IMR-90 (cell line): ENCODE measurements at regions of chr11 and their contacts with region 1.

Region 1: GRCh38 chr11:2885676-2886081 is at the start of gene CDKN1C:
- DNase-seq: peak; percentile 69
- ATAC-seq: peak; percentile 79
- H3K4me3 ChIP-seq: peak within 1 kb of the TSS; percentile 86
- H3K27ac ChIP-seq: peak within 1 kb of the TSS; percentile 44
- H3K4me1 ChIP-seq: peaks cover 13% of the 10 kb centered on the region
- H3K27me3 ChIP-seq: no peaks in the 10 kb centered on the region; the same call in 1 of the 2 replicates
- CTCF ChIP-seq: no peak
- POLR2A ChIP-seq: peak; percentile 79
- RAD21 ChIP-seq: no peak
- total RNA-seq, gene CDKN1C: 1.6 and 2.2 TPM in 2 replicates

Region 2: GRCh38 chr11:2196970-2197770 is 688.5 kb before region 1 on chr11:
- CTCF ChIA-PET with region 1: no interaction called
- POLR2A ChIA-PET with region 1: no interaction called
- dilution Hi-C with region 1: no loop called
- in situ Hi-C with region 1: loop called (anchors 25 kb)
- intact Hi-C with region 1: loop called (anchors 10 kb)
- DNase-seq: peak; percentile 38
- ATAC-seq: peak; percentile 93
- H3K4me3 ChIP-seq: no peak overlapping the region
- H3K27ac ChIP-seq: no peak overlapping the region
- H3K4me1 ChIP-seq: no peaks in the 10 kb centered on the region
- H3K27me3 ChIP-seq: peaks cover 17% of the 10 kb centered on the region; the same call in 1 of the 2 replicates
- CTCF ChIP-seq: peak; percentile 81
- POLR2A ChIP-seq: no peak
- RAD21 ChIP-seq: peak; percentile 86

Region 3: GRCh38 chr11:2428322-2428795 is 457.3 kb before region 1 on chr11:
- CTCF ChIA-PET with region 1: no interaction called
- POLR2A ChIA-PET with region 1: no interaction called
- dilution Hi-C with region 1: no loop called
- in situ Hi-C with region 1: loop called (anchors 10 kb)
- intact Hi-C with region 1: loop called (anchors 1 kb)
- DNase-seq: peak; percentile 34
- ATAC-seq: peak; percentile 88
- H3K4me3 ChIP-seq: no peak overlapping the region
- H3K27ac ChIP-seq: no peak overlapping the region
- H3K4me1 ChIP-seq: no peaks in the 10 kb centered on the region
- H3K27me3 ChIP-seq: peaks cover 11% of the 10 kb centered on the region; the same call in 1 of the 2 replicates
- CTCF ChIP-seq: peak; percentile 83
- POLR2A ChIP-seq: no peak
- RAD21 ChIP-seq: peak; percentile 84

Region 4: GRCh38 chr11:2644844-2645778 is 240.6 kb before region 1 on chr11:
- CTCF ChIA-PET with region 1: no interaction called
- POLR2A ChIA-PET with region 1: no interaction called
- dilution Hi-C with region 1: no loop called
- in situ Hi-C with region 1: no loop called
- intact Hi-C with region 1: loop called (anchors 5 kb)
- DNase-seq: no peak
- ATAC-seq: no peak
- H3K4me3 ChIP-seq: no peak overlapping the region
- H3K27ac ChIP-seq: no peak overlapping the region
- H3K4me1 ChIP-seq: no peaks in the 10 kb centered on the region
- H3K27me3 ChIP-seq: no peaks in the 10 kb centered on the region; the same call in 1 of the 2 replicates
- CTCF ChIP-seq: no peak
- POLR2A ChIP-seq: no peak
- RAD21 ChIP-seq: no peak

Region 5: DNA sequence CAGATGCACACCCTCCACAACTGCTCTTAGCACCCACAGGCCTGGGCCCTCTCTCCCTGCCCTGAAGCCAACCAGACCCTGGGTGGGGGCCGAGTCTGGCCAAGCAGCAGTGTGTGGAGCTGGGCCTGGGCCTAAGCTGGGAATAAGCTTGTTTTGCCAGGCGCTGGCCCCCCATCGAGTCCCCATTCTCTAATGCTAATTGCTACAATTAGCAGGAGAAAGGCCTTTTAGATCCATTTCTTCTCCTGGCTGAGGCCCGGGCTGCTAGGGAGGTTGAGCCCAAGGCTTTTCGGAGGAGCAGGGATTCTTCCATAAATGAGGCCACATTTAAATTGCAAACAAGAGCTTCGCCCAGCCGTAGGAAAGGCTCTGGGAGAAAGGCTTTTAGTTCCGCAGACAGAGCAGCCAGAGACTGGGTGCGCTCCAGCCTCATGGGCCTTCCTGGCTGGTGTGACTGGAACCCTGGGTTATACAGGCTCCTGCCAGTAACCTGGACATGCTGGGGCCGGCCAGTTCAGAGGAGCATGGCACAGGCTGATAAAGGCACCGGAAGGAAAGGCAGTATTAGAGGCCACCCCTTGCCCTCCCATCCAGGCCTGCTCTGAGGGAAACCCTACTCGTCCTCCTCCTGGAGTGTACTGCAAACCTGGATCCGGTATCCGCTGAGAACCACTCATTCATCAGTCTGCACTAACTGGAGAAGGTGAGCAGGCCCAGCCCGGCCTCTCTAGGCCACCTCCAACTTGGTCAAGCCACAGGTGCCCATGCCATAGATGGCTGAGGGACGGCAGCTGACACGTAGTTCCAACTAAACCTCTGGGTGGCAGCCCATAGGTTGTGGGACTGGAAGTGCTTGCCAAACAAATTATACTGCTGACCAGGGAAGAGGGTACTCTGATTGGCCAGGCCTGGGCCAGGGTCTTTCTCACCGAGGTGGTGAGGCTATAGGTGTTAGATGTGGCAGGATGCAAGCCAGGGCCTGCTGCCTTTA is 192.1 kb before region 1 on chr11:
- CTCF ChIA-PET with region 1: no interaction called
- POLR2A ChIA-PET with region 1: no interaction called
- dilution Hi-C with region 1: no loop called
- in situ Hi-C with region 1: no loop called
- intact Hi-C with region 1: loop called (anchors 2 kb)
- DNase-seq: no peak
- ATAC-seq: no peak
- H3K4me3 ChIP-seq: no peak overlapping the region
- H3K27ac ChIP-seq: no peak overlapping the region
- H3K4me1 ChIP-seq: peaks cover 3% of the 10 kb centered on the region
- H3K27me3 ChIP-seq: no peaks in the 10 kb centered on the region; the same call in 1 of the 2 replicates
- CTCF ChIP-seq: no peak
- POLR2A ChIP-seq: no peak
- RAD21 ChIP-seq: no peak

Region 6: DNA sequence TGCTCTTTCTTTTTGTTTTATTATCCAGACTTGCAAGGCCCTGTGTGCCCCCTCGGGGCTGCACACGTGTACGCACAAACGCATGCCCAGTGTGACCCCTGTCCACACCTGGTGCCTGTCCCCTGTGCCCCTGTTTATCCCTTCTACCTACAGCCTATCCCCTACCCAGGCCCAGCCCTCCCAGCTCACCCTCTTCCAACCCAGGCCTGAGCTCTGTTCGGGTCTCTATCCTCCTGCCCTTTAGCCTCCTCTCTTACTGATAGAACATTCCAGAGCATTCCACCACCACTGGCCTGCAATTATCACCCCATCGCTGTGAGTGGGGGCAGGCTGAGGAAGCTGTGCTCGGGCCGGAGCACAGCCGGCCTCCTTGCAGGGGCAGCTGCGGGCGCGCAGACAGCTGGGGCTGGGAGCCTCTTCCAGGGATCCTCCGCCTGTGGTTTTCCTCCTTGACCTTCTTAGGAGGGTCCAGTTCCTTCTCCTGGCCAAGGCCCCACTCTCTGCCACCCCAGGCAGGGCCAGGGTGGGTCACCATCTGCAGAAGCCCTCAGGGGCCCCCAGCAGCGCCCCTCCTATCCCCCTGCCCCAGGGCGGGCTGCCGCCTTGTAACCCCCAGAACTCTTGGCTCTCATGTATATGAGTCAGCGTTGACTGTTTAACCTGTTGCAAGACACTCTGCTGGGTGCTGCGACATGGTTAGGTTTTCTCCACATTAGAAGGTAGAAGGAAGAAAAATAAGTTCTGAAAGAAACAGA is 144.1 kb before region 1 on chr11:
- CTCF ChIA-PET with region 1: no interaction called
- POLR2A ChIA-PET with region 1: no interaction called
- dilution Hi-C with region 1: no loop called
- in situ Hi-C with region 1: no loop called
- intact Hi-C with region 1: loop called (anchors 1 kb)
- DNase-seq: peak; percentile 74
- ATAC-seq: peak; percentile 95
- H3K4me3 ChIP-seq: no peak overlapping the region
- H3K27ac ChIP-seq: peak overlapping the region; percentile 74; the same call in 1 of the 2 replicates
- H3K4me1 ChIP-seq: peaks cover 19% of the 10 kb centered on the region
- H3K27me3 ChIP-seq: peaks cover 2% of the 10 kb centered on the region; the same call in 1 of the 2 replicates
- CTCF ChIP-seq: no peak
- POLR2A ChIP-seq: no peak
- RAD21 ChIP-seq: no peak

Region 7: DNA sequence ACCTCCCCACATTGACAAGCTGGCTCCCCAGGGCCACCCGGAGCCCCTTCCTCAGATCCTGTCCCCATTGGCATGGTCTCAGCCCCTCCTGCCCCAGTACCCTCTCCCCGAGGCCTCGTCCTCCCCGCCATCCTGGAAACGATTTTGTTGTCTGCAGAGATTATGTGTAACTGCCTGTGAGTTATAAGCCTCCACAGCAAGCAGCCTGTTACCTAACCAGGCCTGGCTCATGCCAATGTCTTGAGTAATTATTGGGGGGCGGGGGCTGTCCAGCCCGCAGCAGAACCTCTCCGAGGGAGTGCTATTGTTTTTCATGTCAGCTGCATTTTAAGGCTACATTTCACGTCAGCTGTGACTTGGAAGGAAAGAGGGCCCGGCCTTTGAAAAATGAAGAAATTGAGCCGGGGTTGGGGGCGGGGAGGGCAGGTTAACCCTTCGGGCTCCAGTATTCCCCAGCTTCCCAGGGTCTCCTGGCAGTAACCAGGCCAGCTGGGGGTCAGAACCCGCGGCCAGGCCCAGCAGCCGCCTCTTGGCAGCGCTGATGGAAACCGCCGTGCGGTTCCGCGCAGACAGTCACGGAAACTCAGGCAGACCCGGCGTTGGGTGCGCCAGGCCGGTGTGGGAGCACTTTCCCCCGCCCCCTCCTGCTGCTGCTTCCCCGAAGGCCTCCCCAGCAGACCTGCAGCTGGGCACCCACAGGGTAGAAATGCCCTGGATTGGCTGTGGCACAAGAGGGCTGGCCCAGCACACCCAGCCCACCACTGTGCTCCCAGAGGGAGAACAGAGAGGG is 59.6 kb before region 1 on chr11:
- CTCF ChIA-PET with region 1: interaction called, 3 read pairs
- POLR2A ChIA-PET with region 1: no interaction called
- dilution Hi-C with region 1: no loop called
- in situ Hi-C with region 1: no loop called
- intact Hi-C with region 1: loop called (anchors 2 kb)
- DNase-seq: peak; percentile 95
- ATAC-seq: peak; percentile 87
- H3K4me3 ChIP-seq: no peak overlapping the region
- H3K27ac ChIP-seq: peak overlapping the region; percentile 92
- H3K4me1 ChIP-seq: peaks cover 23% of the 10 kb centered on the region
- H3K27me3 ChIP-seq: no peaks in the 10 kb centered on the region
- CTCF ChIP-seq: no peak
- POLR2A ChIP-seq: no peak
- RAD21 ChIP-seq: no peak; the same call in none of the 2 replicates